ENCODE measurements at regions of chr3 and their contacts with region 1.

Region 1: DNA sequence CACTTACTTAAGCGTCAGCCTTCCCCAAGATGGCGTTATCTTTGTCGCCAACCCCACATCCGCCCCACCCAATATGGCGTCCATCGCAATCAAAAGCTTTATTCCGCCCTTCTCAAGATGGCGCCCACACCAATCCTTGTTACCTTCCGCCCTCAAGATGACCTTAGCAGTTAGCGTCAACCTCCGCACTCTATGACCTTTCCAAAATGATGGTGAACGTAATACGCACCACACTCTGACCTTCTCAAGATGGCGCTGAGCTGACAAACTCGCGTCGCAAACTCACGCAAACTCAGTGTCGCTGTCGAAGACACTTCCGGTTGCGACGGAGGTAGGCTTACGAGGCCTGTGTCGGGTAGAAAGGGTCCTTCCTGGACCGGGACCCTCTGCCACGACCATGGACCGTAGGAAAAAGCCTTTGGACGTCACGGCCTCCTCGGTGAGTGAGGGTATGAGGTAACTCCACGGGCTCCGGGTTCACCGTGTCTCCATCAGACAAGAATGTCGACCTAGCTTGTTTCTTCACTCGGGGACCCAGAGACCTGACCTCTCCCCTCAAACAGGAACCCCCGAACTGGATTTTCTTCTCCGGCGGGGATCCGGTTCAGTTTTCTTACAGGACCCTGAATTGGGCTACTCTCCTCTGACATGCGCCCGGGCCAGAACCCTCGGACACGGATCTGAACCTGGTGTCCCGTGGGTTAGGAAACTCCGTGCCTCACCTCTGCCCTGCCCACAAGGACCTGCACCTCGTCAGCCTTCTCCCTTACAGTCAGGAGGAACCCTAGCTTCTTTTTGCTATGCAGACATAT is at the start of gene CCDC174:
- DNase-seq: peak; percentile 87 to 100 (median 94)
- ATAC-seq: peak; percentile 96 to 99 (median 98)
- H3K4me3 ChIP-seq: peak within 1 kb of the TSS; percentile 68 to 83
- H3K4me3 Mint-ChIP-seq: peak within 1 kb of the TSS; percentile 95 to 98 (median 97)
- H3K27ac ChIP-seq: peak within 1 kb of the TSS; percentile 98
- H3K27ac Mint-ChIP-seq: peak within 1 kb of the TSS; percentile 94 to 98
- H3K4me1 ChIP-seq: peaks cover 15 to 21% of the 10 kb centered on the region in 2 experiments
- H3K4me1 Mint-ChIP-seq: peaks cover 56 to 66% (median 60%) of the 10 kb centered on the region in 3 donors
- H3K27me3 ChIP-seq: no peaks in the 10 kb centered on the region
- H3K27me3 Mint-ChIP-seq: no peaks in the 10 kb centered on the region
- total RNA-seq, gene CCDC174: 36.1 to 48.9 (median 40.6) TPM

Region 2: DNA sequence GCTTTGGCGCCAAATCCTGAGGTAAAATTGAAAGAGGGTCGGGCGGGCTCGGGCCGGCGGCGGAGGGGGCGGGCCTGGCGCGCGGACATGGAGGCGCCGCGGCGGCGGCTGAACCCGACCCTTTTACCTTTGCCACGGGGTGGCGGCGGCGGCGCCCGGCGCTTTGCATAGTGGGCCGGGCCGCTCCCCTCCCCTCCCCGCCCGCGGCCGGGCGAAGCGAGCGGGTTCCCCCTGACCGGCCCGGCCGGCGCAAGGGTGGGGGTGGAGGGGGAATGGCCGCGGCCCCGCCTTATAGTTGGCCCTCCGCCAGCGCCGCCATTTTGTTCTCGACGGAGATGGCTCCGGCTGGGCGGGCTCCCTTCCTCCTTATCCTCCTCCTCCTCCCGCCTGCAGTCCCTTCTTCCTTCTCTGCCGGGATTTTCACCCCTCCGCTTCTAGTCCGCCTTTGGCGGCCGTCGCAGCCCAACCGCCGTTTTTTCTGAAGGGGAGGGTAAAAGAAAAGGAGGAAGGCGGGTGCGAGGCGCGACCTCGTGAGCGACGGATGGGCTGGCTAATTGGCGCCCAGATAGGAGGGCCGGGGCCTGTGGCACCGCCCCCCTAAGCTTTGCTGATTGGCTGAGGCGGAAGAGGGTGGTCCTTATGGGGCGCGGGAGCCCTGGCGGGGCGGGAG is 296.4 kb after region 1 on chr3:
- CTCF ChIA-PET with region 1: interaction called in 1 of 2 experiments, 4 read pairs
- POLR2A ChIA-PET with region 1: interaction called in 1 of 2 experiments, 13 read pairs
- DNase-seq: peak; percentile 90 to 98 (median 95)
- ATAC-seq: peak; percentile 85 to 89 (median 88)
- H3K4me3 ChIP-seq: peak overlapping the region; percentile 79 to 96
- H3K4me3 Mint-ChIP-seq: peak overlapping the region; percentile 95 to 100 (median 98)
- H3K27ac ChIP-seq: peak overlapping the region; percentile 96
- H3K27ac Mint-ChIP-seq: peak overlapping the region; percentile 100
- H3K4me1 ChIP-seq: peaks cover 15 to 26% of the 10 kb centered on the region in 2 experiments
- H3K4me1 Mint-ChIP-seq: peaks cover 55 to 69% (median 65%) of the 10 kb centered on the region in 3 donors
- H3K27me3 ChIP-seq: no peaks in the 10 kb centered on the region
- H3K27me3 Mint-ChIP-seq: no peaks in the 10 kb centered on the region

Measured in T-cell (primary cell).